ENCODE measurements at regions of chr1 and their contacts with region 1.

Region 1: DNA sequence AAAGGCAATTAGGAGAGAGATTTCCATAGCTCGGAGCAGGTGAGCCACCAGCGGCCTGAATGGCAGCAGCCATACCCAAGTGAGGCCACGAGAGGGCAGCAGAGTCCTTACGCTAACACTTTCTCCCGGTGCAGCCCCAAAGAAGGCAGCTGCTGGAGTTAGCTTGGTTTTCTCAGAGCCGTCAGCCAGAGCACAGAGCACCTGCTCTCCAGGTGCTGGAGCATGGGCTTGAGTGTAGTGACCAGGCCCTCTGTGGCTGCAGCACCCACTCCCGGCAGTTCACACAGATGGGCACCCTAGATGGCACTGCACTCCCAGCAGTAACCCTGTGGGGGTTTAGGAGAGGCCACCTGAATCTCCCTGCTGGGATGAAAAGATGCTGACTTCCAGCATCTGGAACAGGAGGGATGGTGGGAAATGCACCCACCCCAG is 45.8 kb downstream of the TMCC2 start:
- DNase-seq: peak; percentile 77 to 97 (median 90)
- H3K4me3 ChIP-seq: no peak overlapping the region
- H3K27ac ChIP-seq: peak overlapping the region in 4 of 5 donors; percentile 24 to 76 (median 50)
- H3K4me1 ChIP-seq: peaks cover 0 to 12% of the 10 kb centered on the region in 2 donors
- H3K27me3 ChIP-seq: no peaks in the 10 kb centered on the region
- CTCF ChIP-seq: peak; percentile 97 to 99 (median 98)
- POLR2A ChIP-seq: no peak

Region 2: DNA sequence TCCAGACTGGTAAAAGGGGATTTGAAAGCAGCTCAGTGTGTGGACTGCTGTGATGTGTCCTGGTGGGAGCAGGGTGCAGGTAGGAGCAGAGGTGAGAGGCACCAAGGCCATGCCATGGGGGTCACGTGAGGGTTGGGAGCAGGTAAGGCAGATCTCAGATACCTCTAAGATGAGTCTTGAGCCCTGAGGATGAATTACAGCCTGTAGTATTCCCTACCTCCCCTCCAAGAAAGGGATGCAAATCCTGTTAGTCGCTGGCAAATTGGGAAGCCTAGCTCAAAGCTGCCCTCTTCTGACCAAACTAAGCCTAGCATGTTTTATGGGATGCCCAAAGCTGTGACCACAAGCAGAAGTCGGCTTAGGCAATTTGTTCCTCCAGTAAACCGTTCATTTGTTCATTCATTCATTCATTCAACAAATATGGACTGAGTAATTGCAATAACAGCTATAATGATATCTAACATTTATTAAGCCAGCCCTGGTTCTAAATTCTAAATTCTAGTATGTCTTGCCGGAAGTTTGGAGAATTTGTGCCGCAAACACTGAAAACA is 51.8 kb after region 1 on chr1:
- intact Hi-C with region 1: loop called (anchors 2 kb)
- DNase-seq: peak; percentile 62 to 91 (median 79)
- H3K4me3 ChIP-seq: no peak overlapping the region
- H3K27ac ChIP-seq: no peak overlapping the region
- H3K4me1 ChIP-seq: peaks cover 0 to 11% of the 10 kb centered on the region in 2 donors
- H3K27me3 ChIP-seq: no peaks in the 10 kb centered on the region
- CTCF ChIP-seq: peak; percentile 62 to 89 (median 84)
- POLR2A ChIP-seq: no peak

Region 3: DNA sequence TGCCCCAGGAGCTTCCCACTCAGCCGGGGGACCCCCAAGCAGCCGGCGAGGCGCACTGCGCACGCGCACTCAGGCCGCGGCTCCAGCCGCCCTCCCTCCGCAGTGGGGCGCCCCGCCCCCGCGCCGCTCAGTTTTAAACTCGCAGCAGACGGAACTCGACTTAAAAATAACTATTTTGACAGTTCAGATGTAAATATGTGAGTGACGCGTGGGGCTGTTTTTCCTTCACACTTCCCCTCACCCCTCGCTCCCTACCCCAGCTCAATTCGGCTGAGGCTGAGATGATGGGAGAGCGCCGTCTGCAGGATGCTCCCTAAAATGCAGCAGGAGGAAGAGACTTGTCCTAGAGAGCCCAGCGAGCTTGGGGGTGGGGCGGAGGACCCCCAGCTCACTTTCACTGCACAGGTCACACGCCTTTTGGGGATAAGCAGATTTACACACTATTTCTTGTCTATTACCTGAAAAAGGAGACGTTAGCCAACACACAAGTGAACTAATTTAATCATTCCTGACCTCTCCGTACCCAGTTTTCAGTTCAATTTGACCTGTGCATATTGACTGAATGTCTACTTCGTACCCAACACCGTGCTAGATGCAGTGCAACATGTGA is 157.2 kb after region 1 on chr1:
- intact Hi-C with region 1: loop called in 1 of 2 experiments (anchors 10 kb)
- DNase-seq: peak; percentile 52 to 84 (median 68)
- H3K4me3 ChIP-seq: peak overlapping the region in 3 of 4 donors; percentile 7 to 50 (median 8)
- H3K27ac ChIP-seq: no peak overlapping the region
- H3K4me1 ChIP-seq: peaks cover 0 to 4% of the 10 kb centered on the region in 2 donors
- H3K27me3 ChIP-seq: no peaks in the 10 kb centered on the region
- CTCF ChIP-seq: peak; percentile 78 to 91 (median 85)
- POLR2A ChIP-seq: no peak

Region 4: GRCh38 chr1:205493241-205494085 is 219.9 kb after region 1 on chr1:
- intact Hi-C with region 1: loop called in 1 of 2 experiments (anchors 10 kb)
- DNase-seq: peak in 6 of 7 donors; percentile 39 to 64 (median 54)
- H3K4me3 ChIP-seq: no peak overlapping the region
- H3K27ac ChIP-seq: peak overlapping the region in 1 of 5 donors; percentile 13
- H3K4me1 ChIP-seq: peaks cover 0 to 11% of the 10 kb centered on the region in 2 donors
- H3K27me3 ChIP-seq: no peaks in the 10 kb centered on the region
- CTCF ChIP-seq: no peak
- POLR2A ChIP-seq: no peak

Measured in adrenal gland (tissue), 19 donors.